ENCODE measurements at regions of chr19 and their contacts with region 1.

Region 1: GRCh38 chr19:1863726-1864480 is 524 bp upstream of the KLF16 start:
- DNase-seq: peak; percentile 94
- H3K4me3 Mint-ChIP-seq: peak overlapping the region; percentile 77
- H3K27ac Mint-ChIP-seq: peak overlapping the region; percentile 87
- H3K4me1 Mint-ChIP-seq: peaks cover 53% of the 10 kb centered on the region
- H3K27me3 Mint-ChIP-seq: no peaks in the 10 kb centered on the region

Region 2: DNA sequence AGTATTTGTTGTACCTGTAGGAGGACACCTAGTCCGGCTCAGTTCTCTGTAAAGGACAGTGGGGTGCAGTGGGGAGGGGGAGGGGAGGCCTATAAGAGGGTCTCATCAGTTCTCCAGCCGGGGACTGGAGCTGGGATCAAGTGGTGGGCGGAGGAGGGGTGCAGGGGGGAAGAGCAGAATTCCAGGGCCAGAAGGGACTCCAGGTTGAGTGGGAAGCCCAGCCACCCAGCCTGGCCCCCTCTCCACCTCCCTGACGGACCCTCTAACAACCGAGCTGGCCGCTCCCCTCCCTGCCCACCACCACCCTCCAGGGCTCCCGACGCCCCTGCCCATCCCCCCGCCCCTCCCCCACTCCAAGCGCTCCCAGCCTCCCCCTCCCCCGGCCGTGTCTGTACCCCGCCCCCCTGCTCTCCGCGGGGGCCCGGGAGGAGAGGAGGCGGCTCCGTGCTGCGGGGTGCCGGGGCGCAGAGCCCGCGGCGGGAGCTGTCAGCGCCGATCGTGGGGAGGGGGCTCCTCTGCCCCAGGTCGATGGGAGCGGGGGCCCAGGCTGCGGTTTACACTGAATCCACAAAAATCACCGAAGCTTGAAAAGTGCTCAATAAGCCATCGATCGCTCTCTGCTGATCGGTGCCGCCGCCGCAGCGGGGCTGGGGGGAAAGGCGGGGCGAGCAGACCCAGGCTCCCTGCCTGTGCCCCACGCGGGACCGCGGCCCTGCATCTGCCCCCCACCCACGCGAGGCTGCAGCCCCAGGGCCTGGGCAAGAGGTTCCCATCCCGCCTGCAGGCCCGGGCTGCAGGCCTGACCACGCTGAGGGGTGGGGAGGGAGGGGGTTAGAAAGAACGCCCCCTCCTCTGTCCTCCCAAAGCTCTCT is 145.2 kb before region 1 on chr19:
- CTCF ChIA-PET with region 1: no interaction called
- POLR2A ChIA-PET with region 1: no interaction called
- DNase-seq: no peak
- H3K4me3 Mint-ChIP-seq: no peak overlapping the region
- H3K27ac Mint-ChIP-seq: no peak overlapping the region
- H3K4me1 Mint-ChIP-seq: no peaks in the 10 kb centered on the region
- H3K27me3 Mint-ChIP-seq: peaks cover 36% of the 10 kb centered on the region

Region 3: DNA sequence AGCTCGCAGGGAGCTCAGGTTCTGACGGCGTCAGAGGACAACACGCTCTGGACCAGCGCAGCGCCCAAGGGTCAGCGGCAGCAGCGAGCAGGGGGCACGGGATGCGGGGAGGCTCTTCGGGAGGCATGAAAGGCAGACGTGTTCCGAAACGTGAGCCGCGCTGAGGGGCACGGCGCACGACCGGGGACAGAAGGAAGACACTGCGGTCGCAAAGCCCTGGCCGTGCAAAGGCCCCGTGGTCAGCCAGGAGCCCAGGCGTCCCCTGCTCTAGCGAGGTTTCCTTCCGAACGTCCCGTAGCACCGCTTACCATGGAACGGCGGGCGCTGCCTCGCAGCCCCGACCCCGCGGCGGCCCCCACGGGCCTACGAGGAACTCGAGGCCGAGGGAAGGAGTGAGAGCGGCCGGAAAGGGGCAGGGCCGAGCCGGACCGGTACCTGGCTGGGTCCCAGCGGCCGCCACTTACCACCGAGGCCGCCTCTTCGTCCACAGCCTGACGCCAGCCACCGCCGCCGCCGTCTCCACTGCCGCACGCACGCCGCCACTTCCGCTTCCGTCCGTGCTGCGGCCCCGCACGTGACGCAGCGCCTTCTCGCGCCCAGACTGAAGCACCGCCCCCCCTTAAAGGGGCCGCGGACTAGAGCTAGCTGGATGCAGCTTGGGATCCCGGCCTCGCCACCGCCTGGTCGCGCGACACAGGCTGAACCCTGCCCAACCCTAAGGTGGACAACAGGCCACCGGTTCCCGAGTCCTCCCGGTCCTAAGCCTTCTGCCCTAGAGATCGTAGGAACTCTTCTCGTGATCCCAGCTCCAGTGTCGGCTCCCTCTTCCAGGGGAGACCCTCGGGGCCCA is 12.0 kb after region 1 on chr19:
- CTCF ChIA-PET with region 1: interaction called, 12 read pairs
- POLR2A ChIA-PET with region 1: interaction called, 5 read pairs
- DNase-seq: peak; percentile 89
- H3K4me3 Mint-ChIP-seq: peak overlapping the region; percentile 99
- H3K27ac Mint-ChIP-seq: peak overlapping the region; percentile 98
- H3K4me1 Mint-ChIP-seq: peaks cover 33% of the 10 kb centered on the region
- H3K27me3 Mint-ChIP-seq: no peaks in the 10 kb centered on the region

Measured in activated CD4-positive, alpha-beta T cell treated with anti-CD3 and anti-CD28 coated beads, Interleukin-2, amount 10 ng/mL, durations not matched to agents 7 days and 5 days (primary cell).